Posterior cingulate gyrus (tissue), 11 donors: ENCODE measurements at regions of chr4 and their contacts with region 1.

Region 1: DNA sequence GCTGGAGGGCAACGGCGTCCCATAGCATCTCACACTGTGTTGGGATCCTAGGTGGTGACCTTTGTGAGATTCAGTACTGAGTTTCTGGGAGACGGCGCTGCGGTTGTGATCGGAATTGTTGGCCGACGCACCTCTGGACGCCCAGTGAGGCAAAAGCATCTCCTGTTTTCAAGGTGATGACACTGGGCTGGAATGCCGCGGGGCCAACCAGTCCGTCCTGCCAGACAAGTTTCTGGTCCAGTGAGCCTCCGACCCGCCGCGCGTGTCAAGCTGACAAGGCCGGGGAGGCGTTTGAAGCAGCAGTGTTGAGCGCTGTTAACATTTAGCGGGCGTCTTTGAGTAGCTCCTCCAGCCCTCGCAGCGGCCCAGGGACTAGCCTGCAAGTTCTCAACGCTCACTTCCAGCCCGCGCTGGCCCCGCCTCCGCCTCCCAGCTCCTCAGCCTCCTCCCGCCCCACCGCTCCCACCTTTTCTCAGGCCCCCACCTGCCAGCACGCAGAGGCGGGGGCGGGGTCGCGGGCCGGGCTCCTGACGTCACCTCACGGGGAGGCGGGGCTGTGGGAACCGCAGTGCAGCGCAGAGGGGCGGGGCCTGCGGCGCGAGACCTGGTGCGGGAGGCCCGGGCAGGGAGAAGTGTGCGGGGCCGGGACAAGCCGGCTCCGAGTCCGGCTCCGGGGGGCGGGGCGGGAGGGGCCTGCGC is 476 bp upstream of the CDS1 start:
- DNase-seq: peak; percentile 83 to 99 (median 90)

Region 2: DNA sequence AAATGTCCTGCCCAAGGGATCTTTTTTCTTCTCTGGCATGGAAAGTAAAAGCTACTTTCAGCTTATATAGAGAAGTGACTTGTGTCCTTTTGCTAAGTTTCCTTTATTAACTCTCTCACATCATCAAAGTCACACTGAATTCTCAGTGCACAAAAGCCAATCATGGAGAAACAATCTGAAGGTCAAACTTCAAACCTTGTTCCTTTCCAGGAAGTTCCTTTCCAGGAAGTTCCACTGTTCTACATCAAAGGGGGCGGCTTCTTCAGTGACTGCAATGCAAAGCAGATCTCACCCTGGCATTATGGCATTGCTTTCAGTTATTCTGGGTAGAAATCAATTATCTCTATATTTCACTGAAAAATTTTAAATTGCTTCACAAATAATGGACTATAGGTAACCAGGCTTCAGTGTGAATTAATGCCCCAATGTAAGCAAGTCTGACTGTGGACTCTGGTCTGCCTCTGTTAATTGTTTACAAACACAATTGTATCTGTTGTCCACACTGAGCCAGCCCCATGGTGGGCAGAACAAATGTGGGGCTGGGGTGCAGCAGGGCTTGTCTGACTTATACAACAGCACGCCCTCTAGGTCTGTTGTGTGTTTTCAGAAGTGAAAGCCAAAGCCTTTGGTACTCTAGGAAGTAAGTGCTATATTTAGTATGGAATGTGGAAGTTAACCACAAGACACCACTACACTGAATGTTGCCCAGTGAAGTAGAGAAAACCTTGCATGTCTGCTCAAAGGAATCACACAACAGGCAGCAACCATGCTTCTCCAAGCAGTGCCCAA is 99.2 kb after region 1 on chr4:
- intact Hi-C with region 1: loop called (anchors 10 kb)
- DNase-seq: peak in 2 of 10 donors; percentile 29 to 87

Region 3: DNA sequence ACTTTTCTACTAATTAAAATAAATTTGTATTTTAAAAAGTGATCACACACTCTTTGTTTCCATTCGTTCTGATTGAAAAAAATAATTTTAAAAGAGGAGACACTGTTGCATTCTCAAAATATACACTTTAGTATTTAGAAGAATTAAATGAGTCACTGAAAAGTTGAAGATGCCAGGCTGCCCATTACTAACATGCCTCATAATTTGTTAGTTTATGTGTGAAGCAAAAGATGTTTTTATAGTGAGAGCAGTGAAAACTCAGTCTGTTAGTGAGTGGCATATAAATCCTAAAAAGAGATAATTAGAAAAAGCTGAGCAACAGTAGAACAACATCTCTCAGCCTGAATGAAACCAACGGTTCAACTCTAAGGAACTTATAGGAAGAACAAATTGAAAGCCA is 143.9 kb after region 1 on chr4:
- intact Hi-C with region 1: loop called (anchors 10 kb)
- DNase-seq: no peak